GM18951 (cell line): ENCODE measurements at regions of chr19 and their contacts with region 1.

Region 1: GRCh38 chr19:23054426-23054825 is 51.5 kb upstream of the ZNF728 start:
- POLR2A ChIP-seq: no peak

Region 2: DNA sequence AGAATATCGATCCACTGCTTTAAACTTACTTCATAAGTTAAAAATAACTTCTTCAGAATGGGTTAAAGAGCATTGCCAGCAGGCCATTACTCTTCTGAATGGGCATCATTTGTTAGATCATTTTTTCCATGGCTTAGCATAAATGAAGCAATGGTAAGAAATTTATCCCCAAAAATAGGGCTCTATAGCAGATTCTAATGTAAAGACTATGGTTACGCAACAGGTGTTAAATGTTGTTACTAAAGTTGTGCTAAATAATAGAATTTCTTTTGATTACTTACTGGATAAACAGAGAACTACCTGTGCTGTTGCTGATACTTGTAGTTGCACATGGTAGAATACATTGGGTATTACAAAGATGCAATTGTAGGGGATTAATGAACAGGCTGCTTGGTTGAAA is 616.4 kb before region 1 on chr19:
- in situ Hi-C with region 1: loop called (anchors 10 kb)
- POLR2A ChIP-seq: no peak